Caco-2 (cell line): ENCODE measurements at regions of chr5 and their contacts with region 1.

Region 1: GRCh38 chr5:29614202-29614601 is 1579.3 kb upstream of the CDH6 start:
- DNase-seq: no peak
- H3K4me3 ChIP-seq: no peak overlapping the region
- H3K4me3 Mint-ChIP-seq: no peak overlapping the region
- H3K27ac Mint-ChIP-seq: no peak overlapping the region
- H3K4me1 ChIP-seq: no peaks in the 10 kb centered on the region
- H3K4me1 Mint-ChIP-seq: no peaks in the 10 kb centered on the region
- H3K27me3 ChIP-seq: no peaks in the 10 kb centered on the region
- H3K27me3 Mint-ChIP-seq: no peaks in the 10 kb centered on the region
- CTCF ChIP-seq: no peak

Region 2: DNA sequence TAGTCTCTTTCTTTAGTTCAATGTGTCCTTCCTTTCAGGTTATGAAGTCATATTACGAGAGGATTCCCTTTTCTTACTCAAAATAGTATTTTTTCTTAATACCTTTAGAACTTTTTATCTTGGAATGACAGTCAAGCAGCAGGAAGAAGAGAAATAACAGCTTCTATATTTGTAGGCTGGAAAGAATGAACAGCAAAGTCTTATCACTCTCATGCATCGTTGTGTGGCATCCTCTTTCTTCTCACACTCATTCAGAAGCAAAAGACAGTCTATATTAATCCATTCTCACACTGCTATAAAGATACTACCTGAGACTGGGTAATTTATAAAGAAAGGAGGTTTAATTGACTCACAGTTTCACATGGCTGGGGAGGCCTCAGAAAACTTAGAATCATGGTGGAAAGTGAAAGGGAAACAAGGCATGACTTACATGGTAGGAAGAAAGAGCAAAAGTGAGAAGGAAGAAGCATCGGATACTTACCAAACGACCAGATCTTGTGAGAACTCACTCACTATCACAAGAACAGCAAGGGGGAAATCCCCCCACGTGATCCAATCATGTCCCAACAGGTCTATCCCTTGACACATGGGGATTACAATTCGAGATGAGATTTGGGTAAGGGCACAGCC is 66.9 kb before region 1 on chr5:
- CTCF ChIA-PET with region 1: no interaction called
- POLR2A ChIA-PET with region 1: no interaction called
- intact Hi-C with region 1: loop called (anchors 2 kb)
- DNase-seq: no peak
- H3K4me3 ChIP-seq: no peak overlapping the region
- H3K4me3 Mint-ChIP-seq: no peak overlapping the region
- H3K27ac Mint-ChIP-seq: no peak overlapping the region
- H3K4me1 ChIP-seq: no peaks in the 10 kb centered on the region
- H3K4me1 Mint-ChIP-seq: no peaks in the 10 kb centered on the region
- H3K27me3 ChIP-seq: no peaks in the 10 kb centered on the region
- H3K27me3 Mint-ChIP-seq: peaks cover 4% of the 10 kb centered on the region
- CTCF ChIP-seq: no peak

Region 3: DNA sequence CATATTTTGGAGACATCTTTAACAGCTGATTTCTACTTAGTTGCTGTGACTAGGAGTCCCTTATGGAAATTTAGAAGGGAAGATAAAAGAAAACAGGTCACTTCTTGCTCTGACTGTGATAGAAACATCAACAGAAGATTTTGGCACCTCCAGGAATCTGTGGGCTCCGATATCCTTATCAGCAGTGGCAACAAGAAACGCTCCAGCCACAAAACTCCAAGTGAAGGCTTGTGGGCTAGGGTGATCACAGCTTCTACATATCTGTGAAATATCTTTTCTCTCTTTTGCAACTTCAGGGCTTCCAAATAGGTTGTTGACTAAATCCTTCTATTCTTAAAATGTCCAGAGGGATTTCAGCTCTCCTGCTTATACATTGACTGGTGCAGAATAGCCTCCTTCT is 46.2 kb before region 1 on chr5:
- CTCF ChIA-PET with region 1: no interaction called
- POLR2A ChIA-PET with region 1: no interaction called
- intact Hi-C with region 1: no loop called
- DNase-seq: no peak
- H3K4me3 ChIP-seq: no peak overlapping the region
- H3K4me3 Mint-ChIP-seq: no peak overlapping the region
- H3K27ac Mint-ChIP-seq: no peak overlapping the region
- H3K4me1 ChIP-seq: no peaks in the 10 kb centered on the region
- H3K4me1 Mint-ChIP-seq: no peaks in the 10 kb centered on the region
- H3K27me3 ChIP-seq: no peaks in the 10 kb centered on the region
- H3K27me3 Mint-ChIP-seq: no peaks in the 10 kb centered on the region
- CTCF ChIP-seq: no peak